Endothelial cell of umbilical vein (primary cell): ENCODE measurements at regions of chr11 and their contacts with region 1.

Region 1: DNA sequence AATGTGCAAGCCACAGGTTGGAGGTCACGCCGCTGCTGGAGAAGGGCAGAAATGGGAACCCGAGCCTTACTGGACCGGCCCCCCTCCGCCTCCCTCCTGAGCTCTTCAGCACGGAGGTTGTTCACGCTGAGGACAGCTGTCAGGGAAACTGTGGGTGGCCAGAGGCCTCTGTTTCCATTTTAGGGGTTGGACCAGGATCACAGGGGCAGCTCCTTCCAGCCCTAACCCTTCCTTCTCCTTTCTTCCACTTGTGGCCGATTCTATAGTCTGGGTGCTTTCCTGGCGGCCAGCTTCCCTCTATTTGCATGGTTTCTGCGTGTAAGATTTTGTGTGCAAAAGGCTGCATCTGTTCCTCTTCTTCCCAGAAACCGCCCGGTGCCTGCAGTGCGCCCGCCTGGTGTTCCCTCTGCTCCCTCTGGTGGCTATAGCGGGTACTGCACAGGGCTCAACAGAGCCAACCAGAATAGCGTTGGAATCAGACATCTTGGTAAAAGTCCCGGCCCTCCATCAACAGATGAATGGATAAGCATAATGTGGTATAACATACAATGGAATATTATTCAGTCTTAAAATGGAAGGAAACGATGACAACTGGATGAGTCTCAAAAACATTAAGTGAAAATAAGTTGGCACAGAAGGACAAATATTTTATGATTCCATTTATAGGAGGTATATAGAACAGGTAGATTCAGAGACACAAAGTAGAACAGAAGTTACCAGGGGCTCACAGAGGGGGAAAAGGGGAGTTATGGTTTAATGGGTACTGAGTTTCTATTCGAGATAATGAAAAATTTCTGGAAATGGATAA is 8.4 kb upstream of the SLC22A8 start:
- DNase-seq: peak; percentile 69
- H3K4me3 ChIP-seq: no peak overlapping the region
- H3K27ac ChIP-seq: no peak overlapping the region
- H3K4me1 ChIP-seq: no peaks in the 10 kb centered on the region
- H3K27me3 ChIP-seq: peaks cover 4 to 10% of the 10 kb centered on the region in 2 experiments
- CTCF ChIP-seq: peak; percentile 98 to 99
- POLR2A ChIP-seq: no peak

Region 2: DNA sequence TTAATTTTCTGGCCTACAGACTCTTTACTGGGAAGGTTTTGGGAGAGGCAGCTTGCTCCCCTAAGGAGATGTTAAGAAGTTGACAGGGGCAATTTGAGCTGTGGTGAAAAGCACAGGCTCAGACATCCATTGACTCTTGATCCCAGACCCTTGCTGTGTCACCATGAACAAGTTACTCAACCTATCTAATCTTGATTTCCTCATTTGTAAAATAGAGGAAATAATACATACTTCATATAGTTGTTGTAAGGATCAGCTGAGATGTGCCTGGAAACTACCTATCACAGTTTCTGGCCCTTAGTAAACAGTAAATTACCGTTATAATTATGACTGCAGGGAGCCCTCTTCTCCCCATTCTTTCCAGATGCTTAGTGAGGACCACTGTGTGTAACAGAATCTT is 708.6 kb before region 1 on chr11:
- CTCF ChIA-PET with region 1: no interaction called
- POLR2A ChIA-PET with region 1: no interaction called
- dilution Hi-C with region 1: no loop called
- intact Hi-C with region 1: no loop called
- DNase-seq: no peak
- H3K4me3 ChIP-seq: no peak overlapping the region
- H3K27ac ChIP-seq: no peak overlapping the region
- H3K4me1 ChIP-seq: no peaks in the 10 kb centered on the region
- H3K27me3 ChIP-seq: peaks cover 8 to 12% of the 10 kb centered on the region in 2 experiments
- CTCF ChIP-seq: no peak
- POLR2A ChIP-seq: no peak

Region 3: GRCh38 chr11:62922658-62923431 is 101.2 kb before region 1 on chr11:
- CTCF ChIA-PET with region 1: interaction called, 25 read pairs
- POLR2A ChIA-PET with region 1: no interaction called
- dilution Hi-C with region 1: no loop called
- intact Hi-C with region 1: no loop called
- DNase-seq: no peak
- H3K4me3 ChIP-seq: no peak overlapping the region
- H3K27ac ChIP-seq: no peak overlapping the region
- H3K4me1 ChIP-seq: peaks cover 6% of the 10 kb centered on the region
- H3K27me3 ChIP-seq: peaks cover 39 to 52% of the 10 kb centered on the region in 2 experiments
- CTCF ChIP-seq: peak; percentile 46 to 55
- POLR2A ChIP-seq: no peak

Region 4: DNA sequence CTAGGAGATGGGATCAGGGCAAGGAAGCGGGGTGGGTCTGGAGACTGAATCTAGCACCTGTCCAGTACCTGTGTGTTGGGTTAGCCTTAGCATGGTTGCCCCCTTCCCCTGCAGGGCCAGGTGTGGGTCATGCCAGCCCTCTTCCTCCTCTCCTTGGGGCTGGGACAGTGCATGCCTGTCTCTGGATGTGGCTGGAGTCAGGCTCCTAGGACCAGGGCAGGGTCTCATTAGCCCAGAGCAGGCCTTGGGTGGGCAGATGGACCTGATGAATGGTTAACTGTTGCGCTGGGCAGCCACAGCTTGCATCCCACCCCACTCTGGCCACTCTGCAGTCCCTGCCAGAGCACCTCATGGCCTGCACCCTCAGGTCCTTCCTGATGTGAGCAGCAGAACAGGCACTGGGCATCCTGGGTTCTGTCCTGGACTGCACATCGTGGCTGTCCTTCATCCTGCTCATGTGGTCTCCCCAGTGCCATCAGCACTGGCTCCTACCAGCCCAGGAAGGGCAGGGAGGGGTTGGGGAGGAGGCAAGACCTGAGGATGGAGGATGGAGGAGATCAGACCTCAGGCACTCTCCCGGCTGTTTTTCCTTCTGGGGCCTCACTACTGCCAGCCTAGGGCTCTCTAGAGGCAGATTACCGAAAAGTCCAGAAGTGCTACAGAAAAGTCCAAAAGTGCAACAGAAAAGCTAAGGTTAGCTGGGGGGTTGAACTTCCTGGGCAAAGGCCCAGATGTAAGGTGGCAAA is 90.1 kb before region 1 on chr11:
- CTCF ChIA-PET with region 1: no interaction called
- POLR2A ChIA-PET with region 1: no interaction called
- dilution Hi-C with region 1: no loop called
- intact Hi-C with region 1: no loop called
- DNase-seq: no peak
- H3K4me3 ChIP-seq: no peak overlapping the region
- H3K27ac ChIP-seq: no peak overlapping the region
- H3K4me1 ChIP-seq: no peaks in the 10 kb centered on the region
- H3K27me3 ChIP-seq: peaks cover 0 to 2% of the 10 kb centered on the region in 2 experiments
- CTCF ChIP-seq: no peak
- POLR2A ChIP-seq: no peak

Region 5: DNA sequence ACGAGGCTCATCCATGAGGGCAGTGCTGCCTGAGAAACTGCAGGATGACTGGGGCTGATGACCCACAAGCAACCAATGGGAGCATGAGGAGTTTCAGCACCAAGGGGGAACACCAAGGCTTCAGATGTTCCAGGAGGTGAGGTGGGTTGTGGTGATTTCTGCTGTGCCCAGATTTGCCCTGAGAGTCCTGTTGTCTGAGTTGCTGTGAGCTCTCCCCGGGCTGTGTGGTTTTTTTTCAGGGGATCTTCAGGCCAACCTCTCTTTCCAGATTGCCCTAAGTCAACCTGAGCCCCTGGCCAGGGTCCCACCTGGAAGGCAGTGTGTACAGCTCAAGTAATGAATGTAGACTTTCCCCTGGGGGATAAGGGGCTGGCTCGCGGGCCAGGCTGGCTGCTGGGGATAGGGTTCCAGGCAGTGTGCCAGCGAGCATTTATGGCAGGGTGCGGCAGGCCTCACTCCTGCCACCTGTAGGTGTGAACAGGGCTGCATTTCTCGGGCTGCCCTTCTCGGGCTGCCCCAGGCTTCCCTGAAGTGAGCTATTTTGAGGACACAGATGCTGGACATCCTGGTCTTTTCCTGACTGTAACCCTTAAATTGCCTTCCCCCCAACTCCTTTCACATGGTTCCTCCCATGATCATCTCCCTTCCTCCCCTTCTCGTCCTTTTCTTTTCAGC is 49.1 kb before region 1 on chr11:
- CTCF ChIA-PET with region 1: interaction called, 16 read pairs
- POLR2A ChIA-PET with region 1: no interaction called
- dilution Hi-C with region 1: no loop called
- intact Hi-C with region 1: loop called (anchors 5 kb)
- DNase-seq: peak; percentile 15
- H3K4me3 ChIP-seq: no peak overlapping the region
- H3K27ac ChIP-seq: no peak overlapping the region
- H3K4me1 ChIP-seq: no peaks in the 10 kb centered on the region
- H3K27me3 ChIP-seq: no peaks in the 10 kb centered on the region
- CTCF ChIP-seq: peak; percentile 28 to 56
- POLR2A ChIP-seq: no peak

Region 6: GRCh38 chr11:63212742-63213141 is 188.7 kb after region 1 on chr11:
- CTCF ChIA-PET with region 1: no interaction called
- POLR2A ChIA-PET with region 1: no interaction called
- dilution Hi-C with region 1: no loop called
- intact Hi-C with region 1: loop called (anchors 5 kb)
- DNase-seq: peak; percentile 14
- H3K4me3 ChIP-seq: no peak overlapping the region
- H3K27ac ChIP-seq: no peak overlapping the region
- H3K4me1 ChIP-seq: no peaks in the 10 kb centered on the region
- H3K27me3 ChIP-seq: peaks cover 0 to 2% of the 10 kb centered on the region in 2 experiments
- CTCF ChIP-seq: peak; percentile 34 to 36
- POLR2A ChIP-seq: no peak